Activated T-helper 1 cell treated with anti-CD3 and anti-CD28 coated beads, Interleukin-12 subunit alpha, Interleukin-12 subunit beta, Interleukin-2, Interleukin-4 antibody, amounts not matched to agents 30 ng/mL and 10 ng/mL and 1 ng/mL, durations not matched to agents 14 hours and 24 hours and 36 hours (primary cell): ENCODE measurements at regions of chr4 and their contacts with region 1.

Region 1: GRCh38 chr4:169485791-169486742 is 126.3 kb downstream of the NEK1 start:
- DNase-seq: peak; percentile 5
- H3K4me3 Mint-ChIP-seq: no peak overlapping the region
- H3K27ac Mint-ChIP-seq: no peak overlapping the region
- H3K4me1 Mint-ChIP-seq: no peaks in the 10 kb centered on the region
- H3K27me3 Mint-ChIP-seq: no peaks in the 10 kb centered on the region

Region 2: DNA sequence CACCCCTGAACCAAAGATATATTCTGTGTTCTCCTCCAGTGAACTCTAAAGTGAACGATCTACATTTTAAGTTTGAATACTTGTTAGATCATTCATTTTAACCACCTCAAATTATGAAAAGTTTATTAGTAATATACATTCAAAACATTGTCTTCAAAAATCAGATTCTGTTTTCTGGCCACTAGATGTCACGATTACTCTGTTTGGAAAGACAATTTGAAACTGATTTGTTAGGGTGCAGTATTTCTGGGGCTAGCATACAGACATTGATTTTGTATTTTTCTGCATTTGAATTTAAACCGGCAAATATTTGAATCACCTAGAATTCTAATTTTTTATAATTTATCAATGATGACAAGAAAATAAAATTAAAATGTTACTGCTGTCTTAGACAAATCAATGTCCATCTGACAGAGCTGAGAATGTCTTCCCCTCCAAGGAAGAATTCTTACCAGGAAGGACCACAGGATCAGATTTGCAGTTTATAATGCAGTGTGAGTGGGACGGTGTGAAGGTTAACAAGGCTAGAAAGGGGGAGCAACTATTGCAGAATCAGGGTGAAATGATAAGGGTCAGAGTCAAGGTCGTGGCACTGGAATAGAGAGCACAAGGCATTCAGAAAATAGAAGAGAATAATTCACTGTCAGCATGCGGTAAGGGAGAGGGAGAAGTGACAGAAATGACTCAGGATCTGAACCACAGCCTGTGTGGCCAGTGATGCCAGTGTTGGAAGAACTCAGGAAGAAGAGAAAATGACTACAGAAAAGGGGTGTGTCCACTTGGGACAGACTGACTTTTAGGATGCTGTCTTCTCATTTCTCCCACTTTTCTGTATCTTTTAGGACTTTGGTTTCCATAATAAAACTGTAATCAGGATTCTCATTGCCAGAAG is 1302.1 kb before region 1 on chr4:
- intact Hi-C with region 1: loop called (anchors 10 kb)
- DNase-seq: no peak
- H3K4me3 Mint-ChIP-seq: no peak overlapping the region
- H3K27ac Mint-ChIP-seq: no peak overlapping the region
- H3K4me1 Mint-ChIP-seq: peaks cover 5% of the 10 kb centered on the region
- H3K27me3 Mint-ChIP-seq: no peaks in the 10 kb centered on the region

Region 3: GRCh38 chr4:168923526-168924194 is 562.4 kb before region 1 on chr4:
- intact Hi-C with region 1: loop called (anchors 1 kb)
- DNase-seq: peak; percentile 17
- H3K4me3 Mint-ChIP-seq: no peak overlapping the region
- H3K27ac Mint-ChIP-seq: no peak overlapping the region
- H3K4me1 Mint-ChIP-seq: peaks cover 5% of the 10 kb centered on the region
- H3K27me3 Mint-ChIP-seq: no peaks in the 10 kb centered on the region

Region 4: GRCh38 chr4:169270810-169271691 is 215.0 kb before region 1 on chr4 and contains the start of gene SH3RF1:
- intact Hi-C with region 1: loop called (anchors 10 kb)
- DNase-seq: no peak
- H3K4me3 Mint-ChIP-seq: peak within 1 kb of the TSS; percentile 81
- H3K27ac Mint-ChIP-seq: no peak within 1 kb of the TSS
- H3K4me1 Mint-ChIP-seq: peaks cover 5% of the 10 kb centered on the region
- H3K27me3 Mint-ChIP-seq: peaks cover 51% of the 10 kb centered on the region
- total RNA-seq, gene SH3RF1: 0.49 and 0.69 TPM in 2 replicates

Region 5: DNA sequence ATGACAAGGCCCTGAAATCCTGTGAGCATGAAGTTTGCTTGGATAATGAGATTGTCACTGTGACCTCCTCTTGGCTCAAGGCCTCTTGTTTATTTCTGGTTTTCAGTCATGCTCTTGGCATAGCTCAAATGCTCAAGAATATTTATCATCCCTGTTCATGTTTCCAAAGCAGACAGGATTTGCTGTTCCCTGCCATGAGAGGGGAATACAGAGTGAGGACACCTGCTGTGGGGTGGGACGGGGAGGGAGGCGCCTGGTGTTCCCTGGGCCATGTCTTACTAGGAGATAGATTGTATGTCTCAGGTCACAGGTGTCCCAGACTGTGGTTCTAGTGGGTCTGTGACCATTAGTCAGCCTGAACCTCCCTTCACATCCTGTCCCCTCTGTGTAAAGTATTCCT is 180.4 kb before region 1 on chr4:
- intact Hi-C with region 1: no loop called
- DNase-seq: no peak
- H3K4me3 Mint-ChIP-seq: no peak overlapping the region
- H3K27ac Mint-ChIP-seq: no peak overlapping the region
- H3K4me1 Mint-ChIP-seq: no peaks in the 10 kb centered on the region
- H3K27me3 Mint-ChIP-seq: peaks cover 3% of the 10 kb centered on the region

Region 6: GRCh38 chr4:169369634-169370033 is 116.4 kb before region 1 on chr4:
- intact Hi-C with region 1: loop called (anchors 1 kb)
- DNase-seq: no peak
- H3K4me3 Mint-ChIP-seq: no peak overlapping the region
- H3K27ac Mint-ChIP-seq: no peak overlapping the region
- H3K4me1 Mint-ChIP-seq: no peaks in the 10 kb centered on the region
- H3K27me3 Mint-ChIP-seq: no peaks in the 10 kb centered on the region